ENCODE measurements at regions of chr17 and their contacts with region 1.

Region 1: GRCh38 chr17:56779898-56780733 is 53.6 kb downstream of the C17orf67 start:
- DNase-seq: peak; percentile 84
- H3K4me3 Mint-ChIP-seq: peak overlapping the region; percentile 77
- H3K27ac Mint-ChIP-seq: peak overlapping the region; percentile 94
- H3K4me1 Mint-ChIP-seq: peaks cover 26% of the 10 kb centered on the region
- H3K27me3 Mint-ChIP-seq: peaks cover 8% of the 10 kb centered on the region

Region 2: DNA sequence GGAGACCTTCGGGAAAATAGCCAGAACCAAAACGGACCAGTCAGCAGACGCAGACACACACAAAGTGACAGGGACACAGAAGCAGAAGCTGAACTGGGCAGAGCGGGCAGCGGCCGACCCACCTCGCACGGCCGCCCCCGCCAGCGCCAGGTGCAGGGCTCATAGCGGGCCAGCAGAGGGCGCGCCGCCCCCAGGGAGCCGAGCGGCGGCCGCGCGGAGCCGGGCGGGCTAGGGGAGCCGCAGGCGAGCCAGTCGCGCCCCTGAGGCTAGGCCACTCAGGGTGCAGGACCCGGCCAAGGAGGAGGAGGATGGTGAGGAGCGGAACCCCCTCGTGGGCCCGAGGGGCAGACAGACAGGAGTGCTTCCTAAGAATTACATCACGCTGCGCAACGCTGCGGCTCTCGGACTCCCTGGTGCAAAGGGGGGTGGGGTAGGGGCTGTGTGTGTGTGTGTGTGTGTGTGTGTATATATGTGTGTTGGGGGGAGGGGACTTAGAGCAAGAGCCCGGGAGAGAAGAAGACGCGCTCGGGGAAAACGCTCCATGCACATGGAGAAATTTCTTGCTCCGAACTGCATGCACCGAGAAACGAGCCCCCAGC is 187.5 kb before region 1 on chr17:
- CTCF ChIA-PET with region 1: interaction called, 11 read pairs
- POLR2A ChIA-PET with region 1: interaction called, 3 read pairs
- DNase-seq: peak; percentile 51
- H3K4me3 Mint-ChIP-seq: peak overlapping the region; percentile 64
- H3K27ac Mint-ChIP-seq: no peak overlapping the region
- H3K4me1 Mint-ChIP-seq: peaks cover 21% of the 10 kb centered on the region
- H3K27me3 Mint-ChIP-seq: peaks cover 51% of the 10 kb centered on the region

Region 3: DNA sequence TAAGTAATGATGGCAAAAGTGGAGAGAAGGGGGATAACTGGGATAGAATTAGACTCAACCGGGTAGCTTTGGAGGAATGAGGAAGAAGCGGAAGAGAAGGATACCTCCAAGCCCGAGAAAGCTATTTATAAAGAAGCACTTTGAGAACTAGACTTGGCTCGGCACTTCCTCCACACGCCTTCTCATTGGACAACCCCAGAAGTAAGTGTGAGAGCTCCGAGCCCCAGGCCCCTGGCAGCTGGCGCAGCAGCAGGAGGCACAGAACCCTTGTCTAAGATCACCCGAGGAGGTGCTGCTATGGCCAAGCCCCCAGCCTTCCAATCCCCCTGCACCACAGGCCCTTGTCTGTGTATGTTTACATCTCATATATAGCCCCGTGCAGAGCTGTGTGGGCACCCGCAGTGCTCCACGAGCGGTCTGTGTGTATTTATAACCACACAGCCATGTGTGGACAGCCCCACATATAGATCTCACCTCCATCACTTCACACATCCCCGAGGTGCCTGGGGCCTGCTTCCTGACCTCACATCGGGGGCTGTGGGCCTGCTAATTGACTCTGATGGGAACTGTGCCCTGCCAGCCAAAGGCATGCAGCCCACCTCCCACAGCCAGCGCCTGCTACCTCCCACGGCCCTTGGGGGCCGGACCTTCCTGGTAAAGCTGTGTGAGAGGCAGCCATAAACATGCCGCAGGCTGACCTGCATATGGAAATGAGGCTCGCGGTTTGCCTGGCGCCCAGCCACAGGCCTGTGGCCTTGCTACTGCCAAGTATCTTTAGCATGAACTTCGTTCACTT is 42.6 kb before region 1 on chr17:
- CTCF ChIA-PET with region 1: interaction called, 10 read pairs
- POLR2A ChIA-PET with region 1: no interaction called
- DNase-seq: no peak
- H3K4me3 Mint-ChIP-seq: no peak overlapping the region
- H3K27ac Mint-ChIP-seq: no peak overlapping the region
- H3K4me1 Mint-ChIP-seq: no peaks in the 10 kb centered on the region
- H3K27me3 Mint-ChIP-seq: peaks cover 9% of the 10 kb centered on the region

Region 4: DNA sequence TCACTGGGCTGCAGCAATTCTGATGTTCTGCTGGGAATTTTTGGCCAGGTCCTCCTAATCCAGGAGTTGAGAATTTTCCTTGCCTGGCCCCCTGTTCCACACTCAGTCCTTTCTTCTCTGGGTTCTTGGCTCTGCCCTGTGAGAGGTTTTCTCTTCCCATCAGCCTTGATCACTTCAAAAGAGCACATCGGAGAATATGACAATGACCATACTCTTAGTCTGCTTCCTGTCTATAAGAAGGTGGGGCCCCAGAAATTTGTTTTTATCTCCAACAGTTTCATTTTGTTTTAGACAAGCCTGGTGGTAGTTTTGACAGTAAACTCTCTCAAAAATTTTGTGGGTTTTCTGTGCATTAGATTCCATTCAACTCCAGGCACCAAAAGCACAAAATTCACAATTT is 17.1 kb before region 1 on chr17:
- CTCF ChIA-PET with region 1: interaction called, 18 read pairs
- POLR2A ChIA-PET with region 1: no interaction called
- DNase-seq: peak; percentile 29
- H3K4me3 Mint-ChIP-seq: peak overlapping the region; percentile 8
- H3K27ac Mint-ChIP-seq: peak overlapping the region; percentile 86
- H3K4me1 Mint-ChIP-seq: peaks cover 22% of the 10 kb centered on the region
- H3K27me3 Mint-ChIP-seq: no peaks in the 10 kb centered on the region

Region 5: GRCh38 chr17:56913864-56914640 is 133.9 kb after region 1 on chr17 and contains the start of gene TRIM25:
- CTCF ChIA-PET with region 1: no interaction called
- POLR2A ChIA-PET with region 1: no interaction called
- DNase-seq: peak; percentile 92
- H3K4me3 Mint-ChIP-seq: peak within 1 kb of the TSS; percentile 99
- H3K27ac Mint-ChIP-seq: peak within 1 kb of the TSS; percentile 98
- H3K4me1 Mint-ChIP-seq: peaks cover 52% of the 10 kb centered on the region
- H3K27me3 Mint-ChIP-seq: no peaks in the 10 kb centered on the region
- total RNA-seq, gene TRIM25: 168 to 193 TPM

Measured in activated CD4-positive, alpha-beta T cell treated with anti-CD3 and anti-CD28 coated beads, Interleukin-2, amount 10 ng/mL, durations not matched to agents 7 days and 5 days (primary cell).